Posterior vena cava (tissue), 2 donors: ENCODE measurements at regions of chr13 and their contacts with region 1.

Region 1: GRCh38 chr13:23183292-23183691 is 2.5 kb downstream of the SGCG start:
- DNase-seq: no peak

Region 2: DNA sequence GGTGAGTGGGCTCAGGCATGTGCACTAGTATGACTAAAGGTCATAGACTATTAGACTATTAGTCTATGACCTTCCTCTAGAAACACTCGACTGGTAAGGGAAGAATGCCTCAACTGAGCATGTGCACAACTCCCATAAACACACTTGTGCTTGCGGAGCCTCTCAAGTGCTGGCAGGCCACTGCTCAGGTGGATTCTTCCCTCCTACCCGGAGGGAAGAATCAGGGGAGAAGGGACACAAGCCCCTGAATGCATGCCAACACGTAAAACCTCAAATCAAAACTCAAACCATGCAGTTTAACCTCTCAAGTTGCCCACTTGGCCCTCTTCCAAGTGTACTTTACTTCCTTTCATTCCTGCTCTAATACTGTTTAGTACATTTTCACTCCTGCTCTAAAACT is 290.1 kb before region 1 on chr13:
- intact Hi-C with region 1: no loop called
- DNase-seq: no peak

Region 3: DNA sequence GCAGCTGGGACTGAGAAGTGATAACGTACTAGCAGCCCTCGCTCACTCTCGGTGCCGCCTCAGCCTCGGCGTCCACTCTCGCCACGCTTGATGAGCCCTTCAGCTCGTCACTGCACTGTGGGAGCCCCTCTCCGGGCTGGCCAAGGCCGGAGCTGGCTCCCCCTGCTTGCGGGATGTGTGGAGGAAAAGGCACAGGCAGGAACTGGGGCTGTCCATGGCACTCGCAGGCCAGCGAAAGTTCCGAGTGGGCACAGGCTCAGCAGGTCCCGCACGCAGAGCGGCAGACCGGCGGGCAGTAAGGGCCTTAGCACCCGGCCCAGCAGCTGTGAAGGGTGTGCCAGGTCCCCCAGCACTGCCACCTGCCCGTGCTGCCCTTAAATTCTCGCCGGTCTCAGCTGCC is 41.3 kb before region 1 on chr13:
- intact Hi-C with region 1: loop called in 1 of 2 experiments (anchors 1 kb)
- DNase-seq: no peak

Region 4: DNA sequence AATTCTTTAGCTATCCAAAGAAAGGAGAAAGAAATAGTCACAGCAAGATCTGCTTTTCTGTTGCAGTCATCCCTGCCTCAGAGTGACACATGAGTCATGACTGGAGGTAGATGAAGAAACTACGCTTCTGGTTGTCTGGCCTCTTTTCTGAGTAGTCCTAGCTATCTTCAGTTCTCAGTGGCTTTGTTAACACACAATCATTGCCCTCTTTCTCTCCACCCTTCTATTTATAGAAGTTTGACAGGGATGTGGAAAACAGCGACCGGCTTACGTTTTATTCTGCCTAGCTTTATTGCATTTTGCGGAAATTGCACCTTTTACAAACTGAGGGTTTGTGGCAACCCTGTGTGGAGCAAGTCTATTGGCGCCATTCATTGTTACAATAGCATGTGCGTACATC is 1003.9 kb after region 1 on chr13:
- intact Hi-C with region 1: no loop called
- DNase-seq: no peak